SK-N-SH (cell line): ENCODE measurements at regions of chr16 and their contacts with region 1.

Region 1: GRCh38 chr16:1929578-1930337 is 11.5 kb upstream of the HS3ST6 start:
- DNase-seq: peak; percentile 99
- H3K4me3 ChIP-seq: peak overlapping the region; percentile 56 to 64
- H3K27ac ChIP-seq: peak overlapping the region in 1 of 2 experiments; percentile 77; a peak in 3 of 4 replicates
- H3K4me1 ChIP-seq: peaks cover 0 to 17% of the 10 kb centered on the region in 2 experiments; a peak in 1 of 4 replicates
- H3K27me3 ChIP-seq: no peaks in the 10 kb centered on the region
- CTCF ChIP-seq: peak; percentile 73
- EP300 ChIP-seq: no peak
- RAD21 ChIP-seq: peak; percentile 91

Region 2: DNA sequence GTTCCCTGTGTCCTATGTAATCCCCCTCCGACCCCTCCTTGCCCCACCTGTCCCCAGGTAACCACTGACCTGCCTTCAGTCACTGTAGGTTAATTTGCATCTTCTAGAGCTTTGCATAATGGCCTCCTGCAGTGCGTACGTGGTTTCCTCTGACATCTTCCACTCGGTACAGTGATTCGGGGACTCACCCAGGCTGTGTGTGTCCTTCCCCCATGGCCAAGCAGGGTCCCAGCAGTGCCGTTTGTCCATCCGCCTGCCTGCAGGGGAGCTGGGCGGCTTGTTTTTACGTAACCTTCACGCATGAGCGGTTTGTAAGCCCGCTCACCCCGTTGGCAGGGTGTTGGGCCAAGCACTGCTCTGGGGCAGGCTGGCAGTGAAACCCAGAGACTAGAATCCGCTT is 215.8 kb before region 1 on chr16:
- CTCF ChIA-PET with region 1: no interaction called
- POLR2A ChIA-PET with region 1: no interaction called
- DNase-seq: no peak
- H3K4me3 ChIP-seq: no peak overlapping the region
- H3K27ac ChIP-seq: no peak overlapping the region
- H3K4me1 ChIP-seq: peaks cover 0 to 4% of the 10 kb centered on the region in 2 experiments; a peak in 2 of 4 replicates
- H3K27me3 ChIP-seq: no peaks in the 10 kb centered on the region
- CTCF ChIP-seq: no peak
- EP300 ChIP-seq: no peak
- RAD21 ChIP-seq: no peak

Region 3: GRCh38 chr16:1858189-1858865 is 71.4 kb before region 1 on chr16:
- CTCF ChIA-PET with region 1: interaction called, 137 read pairs
- POLR2A ChIA-PET with region 1: interaction called, 3 read pairs
- DNase-seq: no peak
- H3K4me3 ChIP-seq: no peak overlapping the region
- H3K27ac ChIP-seq: no peak overlapping the region
- H3K4me1 ChIP-seq: no peaks in the 10 kb centered on the region
- H3K27me3 ChIP-seq: 0 out of 2 replicates have a peak, but pooled peaks cover 12% of the 10 kb centered on the region
- CTCF ChIP-seq: no peak
- EP300 ChIP-seq: no peak
- RAD21 ChIP-seq: no peak

Region 4: GRCh38 chr16:1876468-1876867 is 53.3 kb before region 1 on chr16:
- CTCF ChIA-PET with region 1: interaction called, 137 read pairs
- POLR2A ChIA-PET with region 1: no interaction called
- DNase-seq: no peak
- H3K4me3 ChIP-seq: no peak overlapping the region
- H3K27ac ChIP-seq: no peak overlapping the region
- H3K4me1 ChIP-seq: no peaks in the 10 kb centered on the region; a peak in 1 of 4 replicates
- H3K27me3 ChIP-seq: peaks cover 9% of the 10 kb centered on the region; the same call in 1 of the 2 replicates
- CTCF ChIP-seq: no peak
- EP300 ChIP-seq: no peak
- RAD21 ChIP-seq: no peak

Region 5: GRCh38 chr16:1890708-1891050 is 39.1 kb before region 1 on chr16:
- CTCF ChIA-PET with region 1: interaction called, 31 read pairs
- POLR2A ChIA-PET with region 1: interaction called, 4 read pairs
- DNase-seq: peak; percentile 30
- H3K4me3 ChIP-seq: no peak overlapping the region
- H3K27ac ChIP-seq: peak overlapping the region in 1 of 2 experiments; percentile 48; a peak in 2 of 4 replicates
- H3K4me1 ChIP-seq: peaks cover 0 to 4% of the 10 kb centered on the region in 2 experiments; a peak in 1 of 4 replicates
- H3K27me3 ChIP-seq: peaks cover 36% of the 10 kb centered on the region
- CTCF ChIP-seq: no peak
- EP300 ChIP-seq: no peak
- RAD21 ChIP-seq: no peak

Region 6: DNA sequence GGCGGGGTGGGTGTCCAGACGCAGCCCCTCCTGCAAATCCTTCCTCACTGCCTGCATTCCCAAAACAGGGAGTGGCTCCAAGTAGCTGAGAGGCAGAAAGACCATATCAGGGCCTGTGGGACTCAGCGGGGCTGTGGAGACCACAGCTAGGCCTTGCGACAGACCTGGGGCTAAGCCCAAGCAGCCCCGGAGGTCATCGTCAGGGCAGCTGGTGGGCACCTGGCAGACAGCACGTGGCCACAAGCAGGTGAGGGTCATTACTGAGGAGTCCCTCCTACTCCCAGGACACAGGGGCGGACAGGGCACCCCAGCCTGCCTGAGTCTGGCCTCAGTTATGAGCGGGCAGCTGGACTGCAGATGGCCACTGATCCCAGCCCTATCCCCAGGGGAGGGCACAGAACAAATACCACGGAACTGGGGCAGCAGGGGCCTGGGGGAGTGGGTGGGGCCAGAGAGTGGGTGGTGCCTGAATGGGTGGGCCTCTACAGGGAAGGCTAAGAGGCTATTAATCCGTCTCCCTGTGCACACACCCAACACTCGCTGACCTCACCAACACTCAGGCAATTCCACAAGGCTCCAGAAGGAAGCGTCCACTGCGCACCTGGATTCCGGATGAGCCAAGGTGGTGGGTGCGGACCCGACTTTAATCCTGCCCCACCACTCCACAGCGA is 20.1 kb before region 1 on chr16:
- CTCF ChIA-PET with region 1: interaction called, 13 read pairs
- POLR2A ChIA-PET with region 1: no interaction called
- DNase-seq: peak; percentile 81
- H3K4me3 ChIP-seq: no peak overlapping the region
- H3K27ac ChIP-seq: no peak overlapping the region; a peak in 1 of 4 replicates
- H3K4me1 ChIP-seq: peaks cover 0 to 11% of the 10 kb centered on the region in 2 experiments; a peak in 1 of 4 replicates
- H3K27me3 ChIP-seq: no peaks in the 10 kb centered on the region
- CTCF ChIP-seq: no peak
- EP300 ChIP-seq: no peak
- RAD21 ChIP-seq: no peak

Region 7: GRCh38 chr16:1942810-1943726 is 13.3 kb after region 1 on chr16 and contains the start of gene MSRB1:
- CTCF ChIA-PET with region 1: interaction called, 18 read pairs
- POLR2A ChIA-PET with region 1: interaction called, 11 read pairs
- DNase-seq: peak; percentile 100
- H3K4me3 ChIP-seq: peak within 1 kb of the TSS; percentile 91 to 95
- H3K27ac ChIP-seq: peak within 1 kb of the TSS in 1 of 2 experiments; percentile 64; a peak in 1 of 4 replicates
- H3K4me1 ChIP-seq: peaks cover 0 to 10% of the 10 kb centered on the region in 2 experiments; a peak in 2 of 4 replicates
- H3K27me3 ChIP-seq: no peaks in the 10 kb centered on the region
- CTCF ChIP-seq: 0 out of 2 replicates have a peak, but pooled peaks have one; percentile 15
- EP300 ChIP-seq: no peak
- RAD21 ChIP-seq: no peak
- polyA plus RNA-seq, gene MSRB1: 30.1 and 31.4 TPM in 2 replicates